Activated B cell treated with CpG ODN at 0.5 μM for 24 hours (primary cell): ENCODE measurements at regions of chr19 and their contacts with region 1.

Region 1: DNA sequence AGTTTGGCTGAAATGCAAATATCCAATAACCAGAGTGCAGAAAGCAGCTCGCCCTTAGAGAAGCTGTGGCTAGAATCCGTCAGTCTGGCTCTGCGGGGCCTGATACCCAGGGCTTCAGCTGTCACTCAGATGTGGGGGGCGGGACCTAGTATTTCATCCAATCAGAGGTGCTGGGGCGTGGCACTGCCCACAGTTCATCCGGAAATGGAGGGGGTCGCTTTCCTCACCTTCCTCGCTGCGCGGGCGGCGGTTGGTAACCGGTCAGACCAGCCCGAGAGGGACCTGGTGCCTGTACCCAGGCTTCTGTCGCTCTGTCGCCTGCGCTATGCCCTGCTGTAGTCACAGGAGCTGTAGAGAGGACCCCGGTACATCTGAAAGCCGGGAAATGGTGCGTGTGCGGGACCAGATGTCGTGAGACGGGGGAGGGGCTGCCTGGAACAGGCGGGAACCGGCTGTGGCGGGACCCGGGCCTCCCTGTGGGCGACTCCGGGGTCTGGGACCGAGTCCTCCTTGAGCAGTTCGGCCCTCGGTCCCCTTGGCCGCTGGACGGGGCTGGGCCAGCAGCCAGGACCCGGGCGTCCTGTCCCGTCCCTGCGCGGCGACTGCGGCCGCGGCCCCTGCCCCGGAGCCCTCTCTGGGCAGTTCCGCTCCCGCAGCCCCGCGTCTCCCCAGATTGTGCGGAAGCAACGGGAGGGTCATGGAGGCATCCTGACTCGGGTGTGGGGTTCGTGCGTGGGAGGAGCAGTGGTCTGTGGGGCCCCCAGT is at the start of gene ZNF700:
- DNase-seq: peak; percentile 86
- ATAC-seq: peak; percentile 87
- H3K4me3 Mint-ChIP-seq: peak within 1 kb of the TSS; percentile 99
- H3K27ac Mint-ChIP-seq: peak within 1 kb of the TSS; percentile 98
- H3K4me1 Mint-ChIP-seq: peaks cover 44% of the 10 kb centered on the region
- H3K27me3 Mint-ChIP-seq: no peaks in the 10 kb centered on the region
- CTCF ChIP-seq: no peak
- total RNA-seq, gene ZNF700: 24.5 and 33.1 TPM in 2 replicates

Region 2: DNA sequence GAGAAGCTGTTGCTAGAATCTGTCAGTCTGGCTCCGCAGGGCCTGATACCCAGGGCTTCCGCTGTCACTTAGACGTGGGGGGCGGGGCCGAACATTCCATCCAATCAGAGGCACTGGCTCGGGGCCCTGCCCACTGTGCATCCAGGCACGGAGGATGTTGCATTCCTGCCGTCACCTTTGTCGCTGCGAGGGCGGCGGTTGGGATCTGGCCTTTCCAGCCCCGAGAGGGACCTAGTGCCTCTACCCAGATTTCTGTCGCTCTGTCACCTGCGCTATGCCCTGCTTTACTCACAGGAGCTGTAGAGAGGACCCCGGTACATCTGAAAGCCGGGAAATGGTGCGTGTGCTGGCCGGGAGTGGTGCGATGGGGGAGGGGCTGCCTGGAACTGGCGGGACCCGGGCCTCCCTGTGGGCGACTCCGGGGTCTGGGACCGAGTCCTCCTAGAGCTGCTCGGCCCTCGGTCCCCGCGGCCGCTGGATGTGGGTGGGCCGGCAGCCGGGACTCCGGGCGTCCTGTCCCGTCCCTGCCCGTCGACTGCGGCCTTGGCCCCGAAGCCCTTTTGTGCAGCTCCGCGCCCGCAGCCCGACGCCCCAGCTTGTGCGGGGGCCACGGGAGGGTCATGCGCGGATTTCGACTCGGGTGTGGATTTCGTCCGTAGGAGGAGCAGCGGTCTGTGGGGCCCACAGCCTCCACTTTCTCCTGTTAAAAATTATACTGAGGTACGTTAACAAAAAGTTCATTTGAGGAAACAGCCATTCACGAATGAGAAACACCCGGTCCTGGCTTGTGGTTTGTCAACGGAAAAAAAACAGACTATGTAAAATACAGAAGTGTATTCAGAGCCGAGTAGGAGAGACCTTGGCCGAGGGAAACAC is 76.2 kb before region 1 on chr19 and contains the start of gene ZNF439:
- CTCF ChIA-PET with region 1: no interaction called
- POLR2A ChIA-PET with region 1: interaction called, 4 read pairs
- intact Hi-C with region 1: loop called (anchors 2 kb)
- DNase-seq: peak; percentile 87
- ATAC-seq: peak; percentile 99
- H3K4me3 Mint-ChIP-seq: peak within 1 kb of the TSS; percentile 94
- H3K27ac Mint-ChIP-seq: peak within 1 kb of the TSS; percentile 92
- H3K4me1 Mint-ChIP-seq: peaks cover 36% of the 10 kb centered on the region
- H3K27me3 Mint-ChIP-seq: no peaks in the 10 kb centered on the region
- CTCF ChIP-seq: no peak
- total RNA-seq, gene ZNF439: 19.9 and 22.8 TPM in 2 replicates

Region 3: DNA sequence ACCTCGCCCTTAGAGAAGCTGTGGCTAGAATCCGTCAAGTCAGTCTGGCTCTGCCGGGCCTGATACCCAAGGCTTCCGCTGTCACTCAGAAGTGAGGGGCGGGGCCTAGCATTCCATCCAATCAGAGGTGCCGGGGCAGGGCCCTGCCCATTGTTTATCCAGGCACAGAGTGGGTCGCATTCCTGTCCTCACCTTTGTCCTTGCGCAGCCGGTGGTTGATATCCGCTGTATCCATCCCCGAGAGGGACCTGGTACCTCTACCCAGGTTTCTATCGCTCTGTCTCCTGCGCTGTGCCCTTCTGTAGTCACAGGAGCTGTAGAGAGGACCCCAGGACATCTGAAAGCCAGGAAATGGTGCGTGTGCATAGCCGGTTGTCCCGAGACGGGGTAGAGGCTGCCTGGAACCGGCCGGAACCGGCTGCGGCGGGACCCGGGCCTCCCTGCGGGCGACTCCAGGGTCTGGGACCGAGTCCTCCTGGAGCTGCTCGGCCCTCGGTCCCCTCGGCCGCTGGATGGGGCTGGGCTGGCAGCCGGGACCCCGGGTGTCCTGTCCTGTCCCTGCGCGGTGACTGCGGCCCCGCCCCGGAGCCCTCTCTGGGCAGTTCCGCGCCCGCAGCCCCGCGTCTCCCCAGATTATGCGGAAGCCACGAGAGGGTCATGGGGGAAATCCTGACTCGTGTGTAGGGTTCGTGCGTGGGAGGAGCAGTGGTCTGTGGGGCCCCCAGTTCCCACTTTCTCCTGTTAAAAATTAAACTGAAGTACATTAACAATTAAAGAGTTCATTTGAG is 40.0 kb after region 1 on chr19 and contains the start of gene ZNF763:
- CTCF ChIA-PET with region 1: interaction called, 46 read pairs
- POLR2A ChIA-PET with region 1: interaction called, 64 read pairs
- intact Hi-C with region 1: loop called (anchors 1 kb)
- DNase-seq: peak; percentile 79
- ATAC-seq: peak; percentile 92
- H3K4me3 Mint-ChIP-seq: peak within 1 kb of the TSS; percentile 93
- H3K27ac Mint-ChIP-seq: peak within 1 kb of the TSS; percentile 97
- H3K4me1 Mint-ChIP-seq: peaks cover 26% of the 10 kb centered on the region
- H3K27me3 Mint-ChIP-seq: no peaks in the 10 kb centered on the region
- CTCF ChIP-seq: no peak
- total RNA-seq, gene ZNF763: 9.8 and 10.0 TPM in 2 replicates

Region 4: DNA sequence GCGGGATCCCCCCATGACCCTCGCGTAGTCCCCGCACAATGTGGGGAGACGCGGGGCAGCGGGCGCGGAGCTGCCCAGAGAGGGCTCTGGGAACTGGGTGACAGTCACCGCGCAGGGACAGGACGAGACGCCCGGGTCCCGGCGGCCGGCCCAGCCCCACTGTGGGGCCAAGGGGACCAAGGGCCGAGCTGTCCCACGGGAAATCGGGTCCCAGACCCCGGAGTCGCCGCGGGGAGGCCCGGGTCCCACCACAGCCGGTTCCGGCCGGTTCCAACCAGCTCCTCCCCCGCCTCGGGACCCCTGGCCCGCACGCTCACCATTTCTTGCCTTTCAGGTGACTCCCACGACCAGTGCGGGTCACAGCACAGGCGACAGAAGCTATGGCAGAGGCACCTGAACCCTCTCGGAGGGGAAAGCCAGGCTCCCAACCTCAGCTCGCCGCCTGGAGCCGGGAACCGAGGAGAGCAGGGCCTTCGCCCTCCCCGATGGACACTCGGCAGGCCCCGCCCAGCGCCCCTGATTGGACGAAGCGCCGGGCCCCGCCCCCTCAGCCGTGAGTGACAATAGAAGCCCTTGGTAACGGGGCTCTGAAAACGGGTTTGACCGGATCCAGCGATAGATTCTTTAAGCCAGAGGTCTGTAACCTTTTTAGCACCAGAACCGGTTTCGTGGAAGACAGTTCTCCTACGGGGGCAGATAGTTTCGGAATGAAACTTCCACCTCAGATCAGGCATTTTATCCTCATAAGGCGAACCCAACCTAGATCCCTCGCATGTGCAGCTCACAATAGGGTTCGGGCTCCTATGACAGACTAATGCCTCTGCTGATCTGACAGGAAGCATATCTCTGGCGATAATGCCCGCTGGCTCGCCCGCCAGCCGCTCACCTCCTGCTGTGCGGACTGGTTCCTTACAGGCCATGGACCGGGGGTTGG is 110.4 kb after region 1 on chr19 and contains the start of gene ZNF433:
- CTCF ChIA-PET with region 1: interaction called, 5 read pairs
- POLR2A ChIA-PET with region 1: interaction called, 11 read pairs
- intact Hi-C with region 1: loop called (anchors 1 kb)
- DNase-seq: peak; percentile 80
- ATAC-seq: peak; percentile 98
- H3K4me3 Mint-ChIP-seq: peak within 1 kb of the TSS; percentile 92
- H3K27ac Mint-ChIP-seq: peak within 1 kb of the TSS; percentile 74
- H3K4me1 Mint-ChIP-seq: peaks cover 20% of the 10 kb centered on the region
- H3K27me3 Mint-ChIP-seq: no peaks in the 10 kb centered on the region
- CTCF ChIP-seq: no peak
- total RNA-seq, gene ZNF433: 6.9 and 8.6 TPM in 2 replicates

Region 5: GRCh38 chr19:12139885-12140547 is 214.9 kb after region 1 on chr19 and contains the start of gene ZNF20:
- CTCF ChIA-PET with region 1: interaction called, 48 read pairs
- POLR2A ChIA-PET with region 1: interaction called, 31 read pairs
- intact Hi-C with region 1: loop called (anchors 1 kb)
- DNase-seq: peak; percentile 85
- ATAC-seq: peak; percentile 96
- H3K4me3 Mint-ChIP-seq: peak within 1 kb of the TSS; percentile 97
- H3K27ac Mint-ChIP-seq: peak within 1 kb of the TSS; percentile 83
- H3K4me1 Mint-ChIP-seq: peaks cover 33% of the 10 kb centered on the region
- H3K27me3 Mint-ChIP-seq: no peaks in the 10 kb centered on the region
- CTCF ChIP-seq: no peak
- total RNA-seq, gene ZNF20: 4.2 and 8.5 TPM in 2 replicates

Region 6: GRCh38 chr19:12333162-12334159 is 408.4 kb after region 1 on chr19 and contains the start of gene ZNF563:
- CTCF ChIA-PET with region 1: no interaction called
- POLR2A ChIA-PET with region 1: interaction called, 4 read pairs
- intact Hi-C with region 1: loop called (anchors 2 kb)
- DNase-seq: peak; percentile 93
- ATAC-seq: peak; percentile 86
- H3K4me3 Mint-ChIP-seq: peak within 1 kb of the TSS; percentile 96
- H3K27ac Mint-ChIP-seq: peak within 1 kb of the TSS; percentile 92
- H3K4me1 Mint-ChIP-seq: peaks cover 39% of the 10 kb centered on the region
- H3K27me3 Mint-ChIP-seq: no peaks in the 10 kb centered on the region
- CTCF ChIP-seq: no peak
- total RNA-seq, gene ZNF563: 3.6 and 3.7 TPM in 2 replicates